Posterior vena cava (tissue), 2 donors: ENCODE measurements at regions of chr3 and their contacts with region 1.

Region 1: GRCh38 chr3:141114816-141115460 is 63.8 kb downstream of the SPSB4 start:
- DNase-seq: no peak

Region 2: GRCh38 chr3:141000027-141000663 is 114.8 kb before region 1 on chr3:
- intact Hi-C with region 1: loop called in 1 of 2 experiments (anchors 10 kb)
- DNase-seq: peak; percentile 85

Region 3: DNA sequence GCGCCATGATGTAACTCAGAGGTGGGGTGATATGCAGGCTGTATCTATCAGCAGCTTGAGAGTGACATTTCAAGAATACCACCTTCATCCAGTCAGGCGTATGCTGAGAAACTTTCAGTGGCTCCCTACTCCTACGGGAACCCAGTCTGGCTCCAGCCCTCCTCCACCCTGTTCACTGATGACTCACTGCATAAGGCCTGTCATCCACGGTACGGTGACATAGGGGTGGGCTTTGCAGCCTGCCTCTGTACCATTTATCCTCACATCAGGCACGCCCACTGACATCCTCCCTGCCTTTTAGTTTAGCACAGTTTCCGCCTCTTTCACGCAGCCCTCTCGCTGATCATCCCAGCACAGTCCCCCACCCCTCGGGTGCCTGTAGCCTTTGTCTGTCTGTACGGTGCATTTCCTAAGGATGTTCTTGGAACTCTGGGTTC is 128.4 kb after region 1 on chr3:
- intact Hi-C with region 1: no loop called
- DNase-seq: no peak